Endothelial cell of umbilical vein (primary cell): ENCODE measurements at regions of chr4 and their contacts with region 1.

Region 1: GRCh38 chr4:114839986-114840385 is 241.4 kb downstream of the UGT8 start:
- DNase-seq: no peak
- H3K4me3 ChIP-seq: no peak overlapping the region
- H3K27ac ChIP-seq: no peak overlapping the region
- H3K4me1 ChIP-seq: no peaks in the 10 kb centered on the region
- H3K27me3 ChIP-seq: no peaks in the 10 kb centered on the region
- CTCF ChIP-seq: no peak
- POLR2A ChIP-seq: no peak

Region 2: GRCh38 chr4:114866901-114867670 is 27.1 kb after region 1 on chr4:
- CTCF ChIA-PET with region 1: no interaction called
- POLR2A ChIA-PET with region 1: interaction called, 17 read pairs
- dilution Hi-C with region 1: no loop called
- intact Hi-C with region 1: no loop called
- DNase-seq: no peak
- H3K4me3 ChIP-seq: no peak overlapping the region
- H3K27ac ChIP-seq: no peak overlapping the region
- H3K4me1 ChIP-seq: no peaks in the 10 kb centered on the region
- H3K27me3 ChIP-seq: no peaks in the 10 kb centered on the region
- CTCF ChIP-seq: no peak
- POLR2A ChIP-seq: no peak

Region 3: DNA sequence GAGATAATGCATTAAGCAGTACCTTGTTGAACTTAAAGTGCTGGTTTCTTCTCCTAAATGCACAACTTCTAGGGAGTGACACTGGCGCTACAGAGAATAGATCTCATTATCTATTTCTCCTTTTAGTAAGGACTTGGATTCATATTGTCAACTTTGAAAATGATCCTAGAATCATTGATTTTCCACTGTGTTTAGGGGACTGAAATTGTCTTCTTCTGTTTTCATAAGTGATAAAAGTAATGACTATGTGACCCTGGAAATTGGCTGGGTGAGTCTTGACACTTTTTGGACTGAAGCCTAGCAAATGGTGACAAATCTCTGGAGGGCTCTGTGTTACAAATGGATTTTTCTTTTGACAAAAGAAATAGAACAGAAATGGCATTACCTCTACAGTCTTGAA is 105.6 kb after region 1 on chr4:
- CTCF ChIA-PET with region 1: no interaction called
- POLR2A ChIA-PET with region 1: no interaction called
- dilution Hi-C with region 1: no loop called
- intact Hi-C with region 1: no loop called
- DNase-seq: no peak
- H3K4me3 ChIP-seq: no peak overlapping the region
- H3K27ac ChIP-seq: no peak overlapping the region
- H3K4me1 ChIP-seq: no peaks in the 10 kb centered on the region
- H3K27me3 ChIP-seq: no peaks in the 10 kb centered on the region
- CTCF ChIP-seq: no peak
- POLR2A ChIP-seq: no peak